ENCODE measurements at regions of chr1 and their contacts with region 1.

Region 1: DNA sequence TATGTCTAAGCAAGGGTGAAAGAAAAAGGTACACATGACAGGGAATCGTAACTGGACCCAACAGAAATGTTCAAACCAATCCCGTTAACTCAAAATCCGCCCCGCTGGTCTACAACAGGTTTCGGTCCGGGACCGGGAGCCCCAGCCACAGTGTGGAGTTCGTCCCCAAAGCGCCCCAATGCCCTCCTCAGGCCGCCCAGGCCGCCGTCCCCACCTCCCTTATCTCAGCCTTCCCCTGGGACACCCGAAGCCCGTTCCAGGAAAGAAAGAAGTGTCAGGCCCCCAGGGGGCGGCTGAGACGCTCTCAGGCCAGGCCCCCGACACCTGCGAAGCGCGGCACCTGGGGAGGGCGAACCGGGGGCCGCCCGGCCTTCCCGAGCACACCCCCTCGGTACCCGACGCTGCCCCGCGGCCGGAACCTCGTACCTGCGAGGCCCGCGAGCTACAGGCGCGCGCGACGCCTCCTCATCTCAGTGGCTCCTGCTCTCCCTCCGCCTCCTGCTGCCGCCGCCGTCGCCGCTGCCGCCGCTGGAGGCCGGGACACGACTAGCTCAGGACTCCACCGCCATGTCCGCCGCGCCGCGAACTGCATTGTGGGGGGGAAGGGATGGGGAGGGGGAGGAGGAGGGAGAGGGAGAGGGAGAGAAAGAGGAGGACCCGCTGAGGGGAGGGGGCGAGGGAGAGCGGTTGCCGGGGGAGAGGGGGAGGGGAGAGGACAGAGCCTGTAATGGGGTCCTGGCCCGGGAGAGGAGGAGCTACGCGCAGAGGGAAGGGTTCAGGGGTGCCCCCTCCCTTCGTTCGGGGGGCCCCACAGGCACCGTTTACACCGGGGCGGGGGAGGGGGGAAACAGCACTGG is at the start of gene TUT4:
- DNase-seq: peak; percentile 75
- ATAC-seq: peak; percentile 74
- H3K4me3 ChIP-seq: peak within 1 kb of the TSS; percentile 91
- H3K27ac ChIP-seq: peak within 1 kb of the TSS; percentile 81
- H3K4me1 ChIP-seq: peaks cover 4% of the 10 kb centered on the region
- H3K27me3 ChIP-seq: no peaks in the 10 kb centered on the region
- CTCF ChIP-seq: 0 out of 2 replicates have a peak, but pooled peaks have one; percentile 10
- POLR2A ChIP-seq: no peak
- RAD21 ChIP-seq: no peak
- total RNA-seq, gene TUT4: 10.9 and 28.6 TPM in 2 replicates

Region 2: DNA sequence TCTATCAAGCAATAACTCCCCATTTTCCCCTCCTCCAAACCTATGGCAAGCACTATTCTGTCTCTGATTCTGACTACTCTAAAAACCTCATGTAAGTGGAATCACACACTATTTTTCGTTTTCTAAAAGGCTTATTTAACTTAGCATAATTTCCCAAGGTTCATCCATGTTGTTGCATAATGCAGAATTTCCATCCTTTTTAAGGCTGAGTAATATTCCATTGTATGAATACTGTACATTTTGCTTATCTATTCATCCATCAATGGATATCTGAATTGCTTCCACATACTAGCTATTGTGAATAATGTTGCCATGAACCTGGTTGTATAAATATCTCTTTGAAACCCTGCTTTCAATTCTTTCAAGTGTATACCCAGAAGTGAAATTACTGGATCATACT is 48.0 kb before region 1 on chr1:
- CTCF ChIA-PET with region 1: no interaction called
- POLR2A ChIA-PET with region 1: interaction called, 11 read pairs
- dilution Hi-C with region 1: no loop called
- in situ Hi-C with region 1: no loop called
- intact Hi-C with region 1: no loop called
- DNase-seq: no peak
- ATAC-seq: no peak
- H3K4me3 ChIP-seq: no peak overlapping the region
- H3K27ac ChIP-seq: no peak overlapping the region
- H3K4me1 ChIP-seq: no peaks in the 10 kb centered on the region
- H3K27me3 ChIP-seq: no peaks in the 10 kb centered on the region
- CTCF ChIP-seq: no peak
- POLR2A ChIP-seq: no peak
- RAD21 ChIP-seq: no peak

Region 3: DNA sequence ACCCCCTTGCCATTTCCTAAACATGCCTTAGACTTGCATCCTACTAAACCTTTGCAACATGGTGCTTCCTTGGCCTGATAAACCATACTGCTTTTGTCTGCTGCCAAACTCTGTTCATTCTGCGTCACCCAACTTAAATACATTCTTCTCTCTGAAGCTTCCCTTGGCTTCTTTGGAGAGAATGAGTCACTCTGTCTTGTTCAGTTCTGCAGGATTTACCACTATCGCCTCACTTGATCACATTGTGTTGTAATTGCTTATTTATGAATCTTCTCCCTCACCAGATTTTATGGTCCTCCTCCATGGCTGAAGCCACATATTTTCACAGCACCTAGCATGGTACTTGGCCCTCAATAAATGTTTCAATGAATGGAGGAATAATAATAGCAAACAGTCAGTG is 21.9 kb after region 1 on chr1:
- CTCF ChIA-PET with region 1: no interaction called
- POLR2A ChIA-PET with region 1: interaction called, 3 read pairs
- dilution Hi-C with region 1: no loop called
- in situ Hi-C with region 1: no loop called
- intact Hi-C with region 1: loop called (anchors 2 kb)
- DNase-seq: peak; percentile 98
- ATAC-seq: peak; percentile 96
- H3K4me3 ChIP-seq: no peak overlapping the region
- H3K27ac ChIP-seq: peak overlapping the region; percentile 28; the same call in 1 of the 2 replicates
- H3K4me1 ChIP-seq: peaks cover 8% of the 10 kb centered on the region
- H3K27me3 ChIP-seq: 0 out of 2 replicates have a peak, but pooled peaks cover 2% of the 10 kb centered on the region
- CTCF ChIP-seq: no peak
- POLR2A ChIP-seq: no peak
- RAD21 ChIP-seq: no peak

Region 4: DNA sequence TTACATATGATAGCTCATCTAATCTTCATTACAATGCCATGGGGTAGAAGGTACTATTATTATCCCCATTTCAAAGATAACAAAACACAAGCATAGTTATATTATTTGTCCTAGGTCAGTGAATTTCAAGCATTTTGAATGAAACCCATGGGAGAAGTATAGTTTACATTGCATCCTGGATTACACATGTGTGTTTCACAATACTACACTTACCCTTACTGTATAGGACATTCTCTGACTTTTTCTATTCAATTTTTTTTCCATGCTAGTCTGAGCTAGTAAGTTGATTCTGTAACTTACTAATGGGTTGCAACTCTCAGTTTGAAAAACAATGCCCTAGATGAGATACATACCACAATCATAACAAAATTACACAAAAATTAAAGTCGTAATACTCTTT is 40.8 kb after region 1 on chr1:
- CTCF ChIA-PET with region 1: no interaction called
- POLR2A ChIA-PET with region 1: interaction called, 15 read pairs
- dilution Hi-C with region 1: no loop called
- in situ Hi-C with region 1: no loop called
- intact Hi-C with region 1: no loop called
- DNase-seq: peak; percentile 15
- ATAC-seq: peak; percentile 57
- H3K4me3 ChIP-seq: no peak overlapping the region
- H3K27ac ChIP-seq: no peak overlapping the region
- H3K4me1 ChIP-seq: peaks cover 1% of the 10 kb centered on the region; the same call in 1 of the 2 replicates
- H3K27me3 ChIP-seq: peaks cover 21% of the 10 kb centered on the region
- CTCF ChIP-seq: no peak
- POLR2A ChIP-seq: no peak
- RAD21 ChIP-seq: no peak